ENCODE measurements at regions of chr1 and their contacts with region 1.

Region 1: DNA sequence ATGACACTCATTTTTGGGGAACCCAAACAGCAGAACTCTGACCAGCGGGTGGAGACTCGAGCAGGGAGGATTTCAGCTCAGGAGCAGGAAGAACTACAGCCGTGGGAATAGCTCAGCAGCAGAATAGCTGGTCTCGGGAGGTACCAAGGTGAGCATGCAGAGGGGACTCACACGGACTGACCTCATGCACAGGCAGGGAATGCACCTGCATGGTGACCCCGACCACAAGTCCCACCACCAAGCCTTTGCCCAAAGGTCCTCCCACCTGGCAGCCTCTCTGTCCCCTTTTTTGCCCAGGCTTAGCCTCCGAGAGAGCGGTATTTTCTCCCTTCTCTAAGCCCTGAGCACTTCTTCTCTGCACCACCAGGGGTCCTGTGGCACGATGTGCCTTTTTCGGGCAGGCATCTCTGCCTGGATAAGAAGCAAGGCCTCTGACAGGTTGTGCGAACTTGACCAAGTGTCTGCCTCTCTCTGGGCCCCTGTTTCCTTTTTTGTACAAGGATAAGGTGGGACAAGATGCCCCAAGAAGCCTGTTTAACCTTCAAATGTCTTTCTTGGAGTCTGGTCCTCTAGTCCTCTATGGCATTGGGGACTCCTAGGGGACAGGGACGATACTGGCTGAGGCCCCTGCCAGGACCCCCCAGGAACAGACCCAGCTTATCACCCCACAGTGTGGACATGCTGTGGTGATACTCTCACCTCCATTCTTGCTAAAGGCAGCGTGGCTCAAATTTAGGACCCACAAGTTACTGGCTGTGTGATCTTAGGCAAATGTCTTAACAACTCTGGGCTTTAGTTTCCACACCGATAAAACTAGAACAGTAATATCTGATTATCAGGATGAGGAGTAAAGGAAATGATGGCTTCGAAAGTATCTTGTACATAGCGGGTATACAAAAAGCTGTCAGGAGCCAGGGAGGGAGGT is 9.0 kb upstream of the FGR start:
- DNase-seq: peak; percentile 78
- H3K4me3 Mint-ChIP-seq: no peak overlapping the region
- H3K27ac Mint-ChIP-seq: no peak overlapping the region
- H3K4me1 Mint-ChIP-seq: peaks cover 7% of the 10 kb centered on the region
- H3K27me3 Mint-ChIP-seq: no peaks in the 10 kb centered on the region

Region 2: DNA sequence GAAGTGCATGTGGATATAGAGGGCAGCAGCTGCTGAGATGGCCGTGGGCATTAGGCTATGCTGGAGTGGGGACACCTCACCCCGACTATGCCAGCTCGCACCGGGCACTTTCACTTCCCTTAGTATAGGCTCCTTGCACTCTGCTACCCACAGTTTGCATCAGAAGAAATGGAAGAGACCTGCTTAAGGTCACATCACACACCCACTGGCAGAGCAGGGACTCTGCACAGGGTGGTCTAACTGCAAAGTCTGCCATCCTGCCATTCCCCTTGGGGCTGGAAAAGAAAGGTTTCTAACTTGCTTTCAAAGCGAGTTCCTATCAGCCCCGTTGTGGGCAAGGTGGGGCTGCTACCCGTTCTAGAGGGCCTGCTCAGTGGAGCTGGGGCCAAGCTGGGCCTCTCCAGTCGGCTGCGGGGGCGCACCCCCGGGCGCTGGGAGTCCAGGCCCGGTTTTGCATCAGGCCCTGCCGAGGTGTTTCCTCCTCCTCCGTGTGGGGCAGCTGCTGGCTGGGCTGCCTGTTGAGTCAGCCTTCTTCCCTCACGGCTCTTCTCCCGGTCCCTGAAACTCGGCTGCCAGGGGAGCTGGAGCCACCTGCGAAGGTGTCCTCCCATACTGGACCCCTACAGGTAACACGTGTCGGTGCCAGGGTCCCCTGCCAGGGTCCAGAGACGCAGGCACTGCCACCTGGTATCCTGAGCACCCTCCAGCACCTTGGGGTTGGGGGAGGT is 302.3 kb before region 1 on chr1 and contains the start of gene SYTL1:
- CTCF ChIA-PET with region 1: no interaction called
- POLR2A ChIA-PET with region 1: no interaction called
- intact Hi-C with region 1: no loop called
- DNase-seq: peak; percentile 80
- H3K4me3 Mint-ChIP-seq: peak within 1 kb of the TSS; percentile 84
- H3K27ac Mint-ChIP-seq: peak within 1 kb of the TSS; percentile 92
- H3K4me1 Mint-ChIP-seq: peaks cover 51% of the 10 kb centered on the region
- H3K27me3 Mint-ChIP-seq: no peaks in the 10 kb centered on the region
- total RNA-seq, gene SYTL1: 27.3 to 30.4 TPM

Region 3: GRCh38 chr1:27656157-27656893 is 12.4 kb after region 1 on chr1:
- CTCF ChIA-PET with region 1: interaction called, 39 read pairs
- POLR2A ChIA-PET with region 1: interaction called, 3 read pairs
- intact Hi-C with region 1: no loop called
- DNase-seq: peak; percentile 41
- H3K4me3 Mint-ChIP-seq: no peak overlapping the region
- H3K27ac Mint-ChIP-seq: no peak overlapping the region
- H3K4me1 Mint-ChIP-seq: peaks cover 29% of the 10 kb centered on the region
- H3K27me3 Mint-ChIP-seq: no peaks in the 10 kb centered on the region

Region 4: GRCh38 chr1:27760426-27760825 is 116.5 kb after region 1 on chr1:
- CTCF ChIA-PET with region 1: no interaction called
- POLR2A ChIA-PET with region 1: no interaction called
- intact Hi-C with region 1: no loop called
- DNase-seq: no peak
- H3K4me3 Mint-ChIP-seq: no peak overlapping the region
- H3K27ac Mint-ChIP-seq: no peak overlapping the region
- H3K4me1 Mint-ChIP-seq: no peaks in the 10 kb centered on the region
- H3K27me3 Mint-ChIP-seq: no peaks in the 10 kb centered on the region

Measured in activated CD4-positive, alpha-beta memory T cell treated with anti-CD3 and anti-CD28 coated beads for 36 hours (primary cell).